GM23248 (cell line): ENCODE measurements at regions of chr6 and their contacts with region 1.

Region 1: DNA sequence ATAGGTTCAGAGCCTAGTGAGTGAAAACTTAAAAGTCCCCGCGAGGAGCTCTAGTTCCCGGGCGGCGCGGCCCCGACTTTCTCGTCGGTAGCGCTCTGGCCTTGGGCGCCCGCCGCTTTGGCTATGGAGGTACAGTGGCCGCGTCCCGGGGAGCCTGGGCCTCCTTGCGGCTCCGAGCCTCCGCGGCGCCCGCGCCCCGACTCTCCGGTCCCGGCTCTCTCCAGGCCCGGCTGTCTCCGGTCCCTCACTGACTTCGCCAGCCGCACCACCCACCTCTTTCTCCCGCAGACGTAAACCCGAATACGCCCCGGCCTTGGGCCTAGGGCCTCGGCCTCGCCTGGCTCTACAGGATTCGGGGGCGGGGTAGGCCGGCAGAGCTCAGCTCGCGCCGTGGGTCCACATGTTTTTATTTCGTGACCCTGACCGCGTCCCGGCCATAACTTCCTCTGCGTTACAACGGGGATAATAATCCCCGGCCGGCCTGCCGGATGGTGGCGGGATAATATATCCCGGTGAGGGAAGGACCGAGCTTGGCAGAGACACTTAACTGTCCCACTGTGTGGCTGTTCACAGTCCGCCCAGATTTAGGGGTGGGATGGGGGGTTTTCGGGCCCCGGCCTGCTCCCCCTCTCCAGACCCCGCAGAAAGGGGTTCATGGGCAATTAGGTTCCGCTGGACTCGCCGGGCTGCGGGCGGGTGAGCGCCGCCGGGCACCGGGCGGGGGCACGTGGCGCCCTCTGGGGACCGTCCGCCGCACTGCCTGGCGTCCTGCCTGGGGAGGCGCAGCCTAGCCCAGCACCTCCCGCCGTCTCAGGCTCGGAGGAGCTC is 10.0 kb upstream of the TBX18 start:
- DNase-seq: peak; percentile 85
- H3K4me3 ChIP-seq: peak overlapping the region; percentile 68
- H3K27ac ChIP-seq: no peak overlapping the region
- H3K4me1 ChIP-seq: peaks cover 13% of the 10 kb centered on the region
- H3K27me3 ChIP-seq: peaks cover 41% of the 10 kb centered on the region

Region 2: DNA sequence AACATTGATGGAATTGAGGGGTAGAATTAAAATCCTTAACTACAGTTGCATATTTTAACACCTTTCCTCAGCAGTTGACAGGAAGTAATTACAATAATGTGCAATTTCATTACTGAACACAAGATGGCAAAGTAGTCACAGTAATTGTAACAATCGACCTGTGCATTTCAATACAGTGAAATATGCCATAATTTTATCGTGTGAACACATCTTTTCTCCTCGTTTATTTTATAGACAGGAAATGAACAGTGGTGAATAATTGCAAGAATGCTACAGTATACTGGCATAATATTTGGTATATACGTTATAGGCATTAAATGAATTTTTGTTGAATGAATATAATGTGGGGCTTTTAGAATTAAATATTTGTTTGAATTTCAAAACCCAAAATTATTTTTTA is 889.8 kb before region 1 on chr6:
- in situ Hi-C with region 1: loop called (anchors 25 kb)
- DNase-seq: peak; percentile 70
- H3K4me3 ChIP-seq: 0 out of 2 replicates have a peak overlapping the region, but pooled peaks have one; percentile 1
- H3K27ac ChIP-seq: no peak overlapping the region
- H3K4me1 ChIP-seq: 0 out of 2 replicates have a peak, but pooled peaks cover 3% of the 10 kb centered on the region
- H3K27me3 ChIP-seq: no peaks in the 10 kb centered on the region

Region 3: GRCh38 chr6:85126485-85127167 is 352.3 kb after region 1 on chr6:
- in situ Hi-C with region 1: loop called (anchors 10 kb)
- DNase-seq: peak; percentile 80
- H3K4me3 ChIP-seq: 0 out of 2 replicates have a peak overlapping the region, but pooled peaks have one; percentile 20
- H3K27ac ChIP-seq: 0 out of 2 replicates have a peak overlapping the region, but pooled peaks have one; percentile 19
- H3K4me1 ChIP-seq: peaks cover 42% of the 10 kb centered on the region
- H3K27me3 ChIP-seq: no peaks in the 10 kb centered on the region

Region 4: GRCh38 chr6:85323435-85324040 is 549.2 kb after region 1 on chr6:
- in situ Hi-C with region 1: loop called (anchors 10 kb)
- DNase-seq: peak; percentile 79
- H3K4me3 ChIP-seq: no peak overlapping the region
- H3K27ac ChIP-seq: no peak overlapping the region
- H3K4me1 ChIP-seq: no peaks in the 10 kb centered on the region
- H3K27me3 ChIP-seq: no peaks in the 10 kb centered on the region

Region 5: DNA sequence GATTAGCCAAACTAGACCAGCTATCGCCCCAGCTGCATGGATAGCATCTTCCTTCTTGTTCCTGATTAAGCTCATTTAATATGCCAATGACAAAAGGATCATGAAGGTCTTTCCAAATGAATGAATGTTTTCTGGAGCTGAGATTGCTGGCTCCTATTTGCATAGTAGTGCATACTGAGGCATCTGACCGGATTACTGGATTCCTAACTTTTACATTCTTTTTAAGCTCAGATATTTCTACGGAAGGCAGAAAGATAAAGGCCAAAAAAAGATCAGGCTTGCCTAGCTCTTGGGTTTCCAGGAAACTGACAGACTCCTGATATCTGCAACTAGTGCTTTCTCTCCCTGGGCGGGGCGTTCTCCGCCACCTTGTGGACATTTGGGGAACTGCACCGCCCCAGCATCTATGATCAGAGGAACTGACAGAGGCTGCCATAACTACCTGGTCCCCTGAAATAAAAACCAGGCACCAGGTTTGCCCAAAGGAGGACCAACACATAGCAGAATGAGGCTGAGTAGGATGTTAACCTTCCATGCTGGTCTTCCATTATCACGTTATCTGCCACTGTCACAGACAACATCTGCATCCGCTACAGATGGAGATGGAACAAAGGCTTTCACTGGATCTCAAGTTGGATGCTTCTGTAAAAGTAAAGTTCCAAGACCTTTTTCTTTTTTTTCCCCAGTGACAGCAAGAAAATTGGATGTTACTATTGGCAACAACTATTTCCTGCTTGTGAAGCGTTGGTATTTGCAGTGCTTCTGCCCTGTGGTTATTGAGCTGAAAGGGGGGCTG is 708.7 kb after region 1 on chr6:
- in situ Hi-C with region 1: loop called (anchors 25 kb)
- DNase-seq: peak; percentile 74
- H3K4me3 ChIP-seq: peak overlapping the region; percentile 37
- H3K27ac ChIP-seq: peak overlapping the region; percentile 78
- H3K4me1 ChIP-seq: peaks cover 36% of the 10 kb centered on the region
- H3K27me3 ChIP-seq: no peaks in the 10 kb centered on the region